CD8-positive, alpha-beta T cell (primary cell): ENCODE measurements at regions of chr5 and their contacts with region 1.

Region 1: GRCh38 chr5:113230711-113231652 is 203.8 kb downstream of the TSSK1B start:
- DNase-seq: no peak
- ATAC-seq: no peak
- H3K4me3 ChIP-seq: no peak overlapping the region
- H3K4me3 Mint-ChIP-seq: no peak overlapping the region
- H3K27ac ChIP-seq: no peak overlapping the region
- H3K27ac Mint-ChIP-seq: no peak overlapping the region
- H3K4me1 ChIP-seq: no peaks in the 10 kb centered on the region
- H3K4me1 Mint-ChIP-seq: peaks cover 15% of the 10 kb centered on the region
- H3K27me3 ChIP-seq: no peaks in the 10 kb centered on the region
- H3K27me3 Mint-ChIP-seq: no peaks in the 10 kb centered on the region
- CTCF ChIP-seq: no peak

Region 2: DNA sequence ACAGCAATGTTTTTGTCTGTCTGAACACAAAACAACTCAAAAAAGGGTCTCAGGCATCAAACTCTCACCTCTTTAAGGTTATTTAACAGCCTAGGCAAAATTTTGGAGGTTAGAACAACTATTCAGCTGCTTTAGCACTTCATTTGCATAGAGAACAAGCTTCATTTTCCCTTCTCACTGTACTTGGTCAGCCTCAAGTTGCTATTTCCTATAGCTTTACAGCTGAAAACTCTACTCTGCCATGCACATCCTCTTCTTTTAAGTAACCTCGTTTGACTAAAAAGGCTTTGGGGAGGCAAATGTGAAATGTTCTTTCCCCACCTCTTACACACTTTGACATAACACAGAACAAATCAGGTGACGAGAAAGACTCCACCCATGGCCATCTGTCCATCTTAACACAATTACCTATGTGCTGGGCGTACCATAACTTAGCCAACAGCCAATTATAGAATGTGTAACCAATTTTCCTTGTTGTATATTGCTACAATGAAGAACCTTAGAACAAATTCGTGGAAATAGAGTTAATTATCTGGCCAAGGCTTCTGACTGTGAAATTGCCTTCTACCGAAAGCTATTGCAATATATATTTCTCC is 58.7 kb before region 1 on chr5:
- CTCF ChIA-PET with region 1: no interaction called
- POLR2A ChIA-PET with region 1: no interaction called
- intact Hi-C with region 1: no loop called
- DNase-seq: no peak
- ATAC-seq: no peak
- H3K4me3 ChIP-seq: no peak overlapping the region
- H3K4me3 Mint-ChIP-seq: no peak overlapping the region
- H3K27ac ChIP-seq: no peak overlapping the region
- H3K27ac Mint-ChIP-seq: no peak overlapping the region
- H3K4me1 ChIP-seq: no peaks in the 10 kb centered on the region
- H3K4me1 Mint-ChIP-seq: no peaks in the 10 kb centered on the region
- H3K27me3 ChIP-seq: no peaks in the 10 kb centered on the region
- H3K27me3 Mint-ChIP-seq: peaks cover 5% of the 10 kb centered on the region
- CTCF ChIP-seq: no peak

Region 3: GRCh38 chr5:113264042-113264441 is 33.1 kb after region 1 on chr5:
- CTCF ChIA-PET with region 1: no interaction called
- POLR2A ChIA-PET with region 1: no interaction called
- intact Hi-C with region 1: loop called in 1 of 2 experiments (anchors 1 kb)
- DNase-seq: no peak
- ATAC-seq: no peak
- H3K4me3 ChIP-seq: no peak overlapping the region
- H3K4me3 Mint-ChIP-seq: no peak overlapping the region
- H3K27ac ChIP-seq: no peak overlapping the region
- H3K27ac Mint-ChIP-seq: no peak overlapping the region
- H3K4me1 ChIP-seq: no peaks in the 10 kb centered on the region
- H3K4me1 Mint-ChIP-seq: peaks cover 3% of the 10 kb centered on the region
- H3K27me3 ChIP-seq: no peaks in the 10 kb centered on the region
- H3K27me3 Mint-ChIP-seq: no peaks in the 10 kb centered on the region
- CTCF ChIP-seq: no peak